ENCODE measurements at regions of chr3 and their contacts with region 1.

Region 1: GRCh38 chr3:141441381-141442364 is 45.2 kb upstream of the RASA2 start:
- DNase-seq: peak; percentile 85
- H3K4me3 ChIP-seq: no peak overlapping the region
- H3K27ac ChIP-seq: peak overlapping the region; percentile 2
- H3K4me1 ChIP-seq: peaks cover 13% of the 10 kb centered on the region
- H3K27me3 ChIP-seq: no peaks in the 10 kb centered on the region
- CTCF ChIP-seq: peak; percentile 91 to 96
- POLR2A ChIP-seq: no peak

Region 2: DNA sequence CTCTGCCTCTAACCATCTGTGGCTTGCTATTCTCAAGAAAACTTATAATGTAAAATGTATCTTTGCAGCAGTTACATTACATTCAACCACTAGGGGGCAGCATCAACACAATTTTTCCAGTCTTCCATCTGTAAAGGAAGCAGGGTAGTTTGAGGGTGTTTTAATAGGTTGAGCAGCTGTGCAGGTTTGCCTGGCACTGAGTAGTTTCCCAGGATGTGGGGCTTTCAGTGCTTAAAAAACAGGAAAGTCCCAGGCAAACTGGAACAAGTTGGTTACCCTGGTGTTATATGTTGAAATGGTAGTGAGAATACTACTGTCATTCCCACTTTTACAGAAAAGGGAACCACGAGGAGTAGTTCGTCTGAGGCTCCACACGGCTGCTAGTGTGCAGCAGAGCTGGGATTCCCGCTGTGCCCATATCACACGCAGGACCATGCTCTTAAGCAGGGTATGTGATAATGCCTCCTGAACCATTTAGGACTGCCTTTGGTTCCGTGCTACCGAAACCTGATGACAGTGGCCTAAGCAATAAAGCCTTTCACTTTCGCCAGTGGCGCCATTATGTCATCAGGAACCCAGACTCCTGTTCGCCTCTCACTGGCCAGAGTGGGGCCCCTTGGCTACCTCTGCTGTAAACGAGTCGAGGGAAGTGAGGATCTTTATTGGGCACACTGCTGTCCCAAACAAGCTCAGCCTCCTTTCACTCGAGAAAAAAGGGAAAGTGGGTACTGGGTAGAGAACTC is 138.0 kb before region 1 on chr3:
- CTCF ChIA-PET with region 1: interaction called, 13 read pairs
- POLR2A ChIA-PET with region 1: no interaction called
- dilution Hi-C with region 1: no loop called
- intact Hi-C with region 1: no loop called
- DNase-seq: peak; percentile 86
- H3K4me3 ChIP-seq: no peak overlapping the region
- H3K27ac ChIP-seq: no peak overlapping the region
- H3K4me1 ChIP-seq: no peaks in the 10 kb centered on the region
- H3K27me3 ChIP-seq: peaks cover 0 to 6% of the 10 kb centered on the region in 2 experiments
- CTCF ChIP-seq: peak; percentile 53 to 68
- POLR2A ChIP-seq: no peak

Region 3: GRCh38 chr3:141370065-141370533 is 71.6 kb before region 1 on chr3:
- CTCF ChIA-PET with region 1: interaction called, 24 read pairs
- POLR2A ChIA-PET with region 1: no interaction called
- dilution Hi-C with region 1: no loop called
- intact Hi-C with region 1: loop called (anchors 1 kb)
- DNase-seq: peak; percentile 94
- H3K4me3 ChIP-seq: peak overlapping the region in 1 of 3 experiments; percentile 86
- H3K27ac ChIP-seq: peak overlapping the region; percentile 96
- H3K4me1 ChIP-seq: peaks cover 47% of the 10 kb centered on the region
- H3K27me3 ChIP-seq: no peaks in the 10 kb centered on the region
- CTCF ChIP-seq: peak; percentile 36 to 47
- POLR2A ChIP-seq: peak; percentile 41

Region 4: GRCh38 chr3:141380987-141381386 is 60.7 kb before region 1 on chr3:
- CTCF ChIA-PET with region 1: interaction called, 12 read pairs
- POLR2A ChIA-PET with region 1: interaction called, 8 read pairs
- dilution Hi-C with region 1: no loop called
- intact Hi-C with region 1: no loop called
- DNase-seq: no peak
- H3K4me3 ChIP-seq: no peak overlapping the region
- H3K27ac ChIP-seq: no peak overlapping the region
- H3K4me1 ChIP-seq: no peaks in the 10 kb centered on the region
- H3K27me3 ChIP-seq: no peaks in the 10 kb centered on the region
- CTCF ChIP-seq: no peak
- POLR2A ChIP-seq: no peak

Region 5: GRCh38 chr3:141402476-141403171 is 39.0 kb before region 1 on chr3:
- CTCF ChIA-PET with region 1: interaction called, 5 read pairs
- POLR2A ChIA-PET with region 1: no interaction called
- dilution Hi-C with region 1: no loop called
- intact Hi-C with region 1: loop called (anchors 1 kb)
- DNase-seq: peak; percentile 76
- H3K4me3 ChIP-seq: peak overlapping the region; percentile 8 to 86 (median 65)
- H3K27ac ChIP-seq: peak overlapping the region; percentile 97
- H3K4me1 ChIP-seq: peaks cover 47% of the 10 kb centered on the region
- H3K27me3 ChIP-seq: no peaks in the 10 kb centered on the region
- CTCF ChIP-seq: peak in 1 of 2 donors; percentile 2
- POLR2A ChIP-seq: peak; percentile 60

Region 6: GRCh38 chr3:141412087-141412935 is 29.4 kb before region 1 on chr3:
- CTCF ChIA-PET with region 1: interaction called, 16 read pairs
- POLR2A ChIA-PET with region 1: interaction called, 3 read pairs
- dilution Hi-C with region 1: no loop called
- intact Hi-C with region 1: loop called (anchors 2 kb)
- DNase-seq: peak; percentile 88
- H3K4me3 ChIP-seq: peak overlapping the region in 1 of 3 experiments; percentile 27
- H3K27ac ChIP-seq: peak overlapping the region; percentile 90
- H3K4me1 ChIP-seq: peaks cover 68% of the 10 kb centered on the region
- H3K27me3 ChIP-seq: no peaks in the 10 kb centered on the region
- CTCF ChIP-seq: no peak
- POLR2A ChIP-seq: peak; percentile 41

Region 7: DNA sequence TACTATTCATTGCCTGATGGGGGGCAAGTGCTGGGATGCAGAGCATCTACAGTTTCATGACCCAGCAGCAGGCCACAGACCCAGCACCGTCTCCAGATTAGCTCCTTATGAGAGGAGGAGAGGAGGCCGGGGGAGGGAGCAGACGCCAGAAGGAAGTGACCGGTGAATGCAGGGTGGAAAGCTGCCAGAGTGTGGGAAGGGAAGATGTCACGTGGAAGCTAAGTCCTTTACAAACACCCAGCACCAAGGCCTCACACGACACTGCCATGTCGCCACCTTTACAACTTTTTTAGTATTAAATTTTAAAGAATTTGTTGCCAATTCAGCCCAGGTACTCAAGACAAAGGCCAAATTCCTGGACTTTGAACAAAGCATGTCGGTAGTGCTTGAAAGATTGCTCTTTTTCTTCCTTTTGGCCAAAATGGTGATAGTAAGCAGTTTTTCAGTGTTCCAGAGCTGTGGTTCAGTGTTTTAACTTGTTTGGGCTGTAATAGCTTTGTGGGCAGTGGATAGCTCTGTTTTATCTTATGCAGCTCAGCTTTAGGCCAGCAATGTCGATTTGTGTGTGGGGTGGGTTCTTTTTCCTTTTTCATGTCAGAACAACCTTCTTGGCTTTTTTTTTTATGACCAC is 15.2 kb before region 1 on chr3:
- CTCF ChIA-PET with region 1: interaction called, 31 read pairs
- POLR2A ChIA-PET with region 1: no interaction called
- dilution Hi-C with region 1: no loop called
- intact Hi-C with region 1: no loop called
- DNase-seq: peak; percentile 89
- H3K4me3 ChIP-seq: no peak overlapping the region
- H3K27ac ChIP-seq: peak overlapping the region; percentile 44
- H3K4me1 ChIP-seq: peaks cover 16% of the 10 kb centered on the region
- H3K27me3 ChIP-seq: no peaks in the 10 kb centered on the region
- CTCF ChIP-seq: no peak
- POLR2A ChIP-seq: no peak

Region 8: DNA sequence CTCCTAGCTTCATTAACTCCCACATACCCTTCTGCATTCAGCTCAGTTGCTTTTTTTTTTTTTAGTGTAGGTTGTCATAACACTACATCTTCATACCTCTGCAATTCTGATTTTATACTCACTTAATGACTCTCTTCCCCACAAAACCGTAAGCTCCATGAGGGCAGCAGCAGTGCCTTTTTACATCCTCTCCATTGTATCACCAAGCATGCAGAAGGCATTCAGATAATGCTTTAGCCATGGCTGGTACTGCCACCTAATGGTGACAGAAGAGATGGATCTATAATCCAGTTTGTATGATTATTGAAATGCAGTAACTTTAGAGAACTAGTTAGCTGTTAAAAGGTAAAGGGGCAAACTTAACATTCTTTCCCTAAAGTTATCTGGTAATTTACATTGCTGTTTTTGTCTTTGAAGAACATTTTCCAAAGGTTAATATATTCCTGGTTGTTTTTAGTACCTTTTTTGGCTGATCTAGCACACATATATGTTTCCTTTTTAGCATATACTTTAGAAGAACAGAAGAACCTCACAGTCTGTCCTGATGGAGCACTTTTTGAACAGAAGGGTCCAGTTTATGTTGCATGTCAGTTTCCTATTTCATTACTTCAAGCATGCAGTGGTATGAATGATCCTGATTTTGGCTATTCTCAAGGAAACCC is 471.6 kb after region 1 on chr3:
- CTCF ChIA-PET with region 1: no interaction called
- POLR2A ChIA-PET with region 1: no interaction called
- dilution Hi-C with region 1: no loop called
- intact Hi-C with region 1: no loop called
- DNase-seq: peak; percentile 71
- H3K4me3 ChIP-seq: no peak overlapping the region
- H3K27ac ChIP-seq: no peak overlapping the region
- H3K4me1 ChIP-seq: no peaks in the 10 kb centered on the region
- H3K27me3 ChIP-seq: no peaks in the 10 kb centered on the region
- CTCF ChIP-seq: peak; percentile 54 to 56
- POLR2A ChIP-seq: no peak

Measured in endothelial cell of umbilical vein (primary cell).